ENCODE measurements at regions of chr1 and their contacts with region 1.

Region 1: DNA sequence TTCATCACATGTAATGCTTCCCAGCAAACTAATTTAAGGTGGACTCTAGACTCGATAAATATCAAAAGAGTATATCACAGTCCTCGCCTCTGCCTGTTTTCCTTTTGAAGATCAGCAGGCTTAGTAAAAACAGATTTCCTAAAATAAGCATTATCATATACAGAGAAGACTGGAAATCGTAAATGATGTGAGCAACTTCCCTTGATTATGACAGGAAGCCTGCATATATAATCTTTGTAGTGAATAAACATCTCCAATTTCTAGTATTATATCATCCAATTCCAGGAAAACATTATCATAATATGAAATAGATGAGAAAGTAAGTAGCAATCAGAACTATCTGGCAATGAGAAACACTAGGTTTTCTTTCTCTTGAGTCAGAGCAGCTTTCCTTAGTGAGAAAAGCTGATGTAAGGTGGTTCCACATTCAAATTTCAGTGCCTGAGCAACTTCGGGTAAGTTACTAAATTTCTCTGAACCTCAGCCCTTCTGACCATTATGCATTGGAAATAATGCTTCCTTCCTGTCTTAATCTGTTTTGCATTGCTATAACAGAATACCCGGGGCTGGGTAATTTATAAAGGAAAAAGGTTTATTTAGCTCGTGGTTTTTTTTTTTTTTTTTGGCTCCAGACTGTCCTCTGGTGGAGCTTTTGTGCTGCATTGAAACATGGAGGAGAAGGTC is 12.6 kb upstream of the POU2F1 start:
- DNase-seq: no peak
- ATAC-seq: peak in 2 of 4 donors; percentile 32 to 66
- H3K4me3 ChIP-seq: no peak overlapping the region
- H3K27ac ChIP-seq: no peak overlapping the region
- H3K4me1 ChIP-seq: no peaks in the 10 kb centered on the region
- H3K27me3 ChIP-seq: no peaks in the 10 kb centered on the region
- CTCF ChIP-seq: no peak

Region 2: GRCh38 chr1:167152192-167152876 is 55.7 kb before region 1 on chr1:
- intact Hi-C with region 1: loop called in 1 of 2 experiments (anchors 5 kb)
- DNase-seq: no peak
- ATAC-seq: no peak
- H3K4me3 ChIP-seq: no peak overlapping the region
- H3K27ac ChIP-seq: no peak overlapping the region
- H3K4me1 ChIP-seq: no peaks in the 10 kb centered on the region
- H3K27me3 ChIP-seq: no peaks in the 10 kb centered on the region
- CTCF ChIP-seq: no peak